Left colon (tissue), 2 donors: ENCODE measurements at regions of chr1 and their contacts with region 1.

Region 1: GRCh38 chr1:7646981-7647901 is 123.9 kb upstream of the VAMP3 start:
- DNase-seq: peak in 1 of 2 donors; percentile 77
- ATAC-seq: peak; percentile 65

Region 2: DNA sequence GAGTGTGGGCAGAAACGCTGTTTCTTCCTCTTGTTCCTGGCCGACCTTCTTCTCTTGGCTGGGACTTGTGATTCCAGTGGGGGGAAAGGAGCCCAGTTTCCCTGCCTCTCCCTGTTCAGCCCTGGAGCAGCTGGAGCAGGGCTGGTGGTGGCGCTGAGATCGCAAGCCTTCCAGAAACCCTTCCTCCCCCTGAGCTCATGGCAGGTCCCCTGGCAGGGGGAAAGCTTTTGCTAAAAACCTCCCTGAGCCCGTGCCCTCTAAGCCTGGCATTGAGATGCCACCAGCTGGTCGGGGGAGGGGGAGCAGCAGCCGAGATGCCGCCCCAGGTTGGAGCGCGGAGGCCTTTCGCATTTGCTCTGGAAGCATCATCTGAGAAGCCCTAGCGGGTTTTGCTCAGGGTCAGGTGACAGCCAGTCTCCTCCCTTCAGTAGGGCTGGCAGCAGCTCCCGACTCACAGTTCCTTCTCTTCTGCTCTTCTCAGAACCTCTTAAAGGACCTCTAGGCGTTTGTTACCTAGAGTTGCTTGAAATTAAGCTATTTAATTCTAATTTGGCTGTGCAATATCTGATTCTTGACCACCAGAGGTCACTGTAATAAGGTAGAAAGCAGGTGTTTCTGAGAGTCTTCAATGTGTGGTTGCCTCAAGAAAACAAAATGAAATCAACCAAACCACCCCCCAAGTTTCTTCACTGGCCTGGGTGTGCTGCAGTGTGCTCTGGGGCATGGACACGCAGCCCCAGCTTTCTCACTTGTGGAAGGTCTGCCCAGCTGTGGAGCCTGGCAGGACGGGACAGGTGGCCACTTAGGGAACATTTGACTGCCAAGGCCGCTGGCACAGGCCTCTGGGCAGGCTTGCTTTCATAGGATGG is 604.7 kb before region 1 on chr1:
- intact Hi-C with region 1: loop called in 1 of 2 experiments (anchors 10 kb)
- DNase-seq: no peak
- ATAC-seq: no peak

Region 3: DNA sequence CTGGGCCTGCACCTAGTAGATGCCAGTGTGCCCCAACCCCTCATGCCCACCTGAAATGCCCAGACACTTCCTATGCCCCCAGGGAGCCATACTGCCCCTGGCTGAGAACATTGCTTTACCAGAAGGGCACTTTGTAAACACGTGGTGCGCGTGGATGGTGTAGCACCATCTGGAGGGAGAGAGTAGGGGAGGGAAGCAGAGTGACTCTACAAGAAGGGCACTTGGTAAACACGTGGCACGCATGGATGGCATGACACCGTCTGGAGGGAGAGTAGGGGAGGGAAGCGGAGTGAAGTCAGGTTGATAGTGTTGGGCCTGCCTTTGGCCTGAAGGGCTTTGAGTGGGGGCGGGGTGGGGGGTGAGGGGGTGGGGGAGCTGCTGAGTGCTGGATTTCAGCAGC is 200.2 kb before region 1 on chr1:
- intact Hi-C with region 1: loop called in 1 of 2 experiments (anchors 10 kb)
- DNase-seq: no peak
- ATAC-seq: no peak